Activated T-helper 1 cell treated with anti-CD3 and anti-CD28 coated beads, Interleukin-12 subunit alpha, Interleukin-12 subunit beta, Interleukin-2, Interleukin-4 antibody, amounts not matched to agents 30 ng/mL and 10 ng/mL and 1 ng/mL, durations not matched to agents 14 hours and 24 hours and 36 hours (primary cell): ENCODE measurements at regions of chr2 and their contacts with region 1.

Region 1: GRCh38 chr2:219388127-219388844 is 574 bp upstream of the DNPEP start:
- DNase-seq: peak; percentile 95
- H3K4me3 Mint-ChIP-seq: peak overlapping the region; percentile 97
- H3K27ac Mint-ChIP-seq: peak overlapping the region; percentile 67
- H3K4me1 Mint-ChIP-seq: peaks cover 6% of the 10 kb centered on the region
- H3K27me3 Mint-ChIP-seq: peaks cover 23% of the 10 kb centered on the region

Region 2: DNA sequence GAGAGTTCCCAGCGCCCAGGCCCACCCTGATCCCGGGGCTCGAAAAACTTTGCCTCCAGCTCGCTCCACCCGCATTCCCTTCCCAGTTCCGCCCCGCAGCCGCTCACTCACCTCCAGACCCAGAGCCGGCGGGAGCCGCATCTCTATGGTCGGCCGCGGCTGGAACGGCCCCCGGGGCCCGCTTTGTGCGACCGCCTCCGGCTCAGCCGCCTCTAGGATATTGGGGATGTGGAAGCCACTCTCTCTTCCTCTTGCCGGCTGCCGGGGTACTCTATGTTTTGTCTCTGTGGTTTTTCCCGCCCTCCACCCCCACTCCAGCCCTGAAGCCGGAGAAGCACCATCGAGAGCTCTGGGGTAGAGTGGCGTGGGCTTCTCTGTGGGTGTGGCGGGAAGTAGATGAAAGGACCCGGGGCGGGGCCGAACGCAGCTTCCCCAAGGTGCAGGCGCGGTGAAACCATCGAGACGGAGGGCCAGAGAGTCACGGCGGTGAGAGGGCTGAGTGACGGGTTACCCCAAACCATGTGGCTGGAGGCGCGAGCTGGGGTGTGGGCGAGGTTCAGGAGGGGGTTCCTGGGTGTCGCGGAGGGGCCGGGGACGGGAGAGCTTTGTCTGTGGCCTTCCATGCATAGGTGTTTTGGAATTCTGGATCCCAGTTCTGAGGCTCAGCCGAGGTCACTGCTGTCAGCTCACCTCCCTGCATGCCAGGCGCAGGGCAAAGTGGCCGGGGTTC is 728.9 kb before region 1 on chr2 and contains the starts of genes BCS1L and ZNF142:
- intact Hi-C with region 1: loop called (anchors 2 kb)
- DNase-seq: peak; percentile 92
- H3K4me3 Mint-ChIP-seq: peak within 1 kb of the TSS; percentile 99
- H3K27ac Mint-ChIP-seq: peak within 1 kb of the TSS; percentile 97
- H3K4me1 Mint-ChIP-seq: peaks cover 29% of the 10 kb centered on the region
- H3K27me3 Mint-ChIP-seq: no peaks in the 10 kb centered on the region
- total RNA-seq, gene BCS1L: 85.1 and 85.3 TPM in 2 replicates
- total RNA-seq, gene ZNF142: 61.8 and 64.4 TPM in 2 replicates

Region 3: GRCh38 chr2:219177552-219178376 is 210.5 kb before region 1 on chr2 and contains the start of gene RETREG2:
- intact Hi-C with region 1: loop called (anchors 1 kb)
- DNase-seq: peak; percentile 74
- H3K4me3 Mint-ChIP-seq: peak within 1 kb of the TSS; percentile 91
- H3K27ac Mint-ChIP-seq: peak within 1 kb of the TSS; percentile 96
- H3K4me1 Mint-ChIP-seq: peaks cover 72% of the 10 kb centered on the region
- H3K27me3 Mint-ChIP-seq: no peaks in the 10 kb centered on the region
- total RNA-seq, gene RETREG2: 58.4 and 61.5 TPM in 2 replicates

Region 4: DNA sequence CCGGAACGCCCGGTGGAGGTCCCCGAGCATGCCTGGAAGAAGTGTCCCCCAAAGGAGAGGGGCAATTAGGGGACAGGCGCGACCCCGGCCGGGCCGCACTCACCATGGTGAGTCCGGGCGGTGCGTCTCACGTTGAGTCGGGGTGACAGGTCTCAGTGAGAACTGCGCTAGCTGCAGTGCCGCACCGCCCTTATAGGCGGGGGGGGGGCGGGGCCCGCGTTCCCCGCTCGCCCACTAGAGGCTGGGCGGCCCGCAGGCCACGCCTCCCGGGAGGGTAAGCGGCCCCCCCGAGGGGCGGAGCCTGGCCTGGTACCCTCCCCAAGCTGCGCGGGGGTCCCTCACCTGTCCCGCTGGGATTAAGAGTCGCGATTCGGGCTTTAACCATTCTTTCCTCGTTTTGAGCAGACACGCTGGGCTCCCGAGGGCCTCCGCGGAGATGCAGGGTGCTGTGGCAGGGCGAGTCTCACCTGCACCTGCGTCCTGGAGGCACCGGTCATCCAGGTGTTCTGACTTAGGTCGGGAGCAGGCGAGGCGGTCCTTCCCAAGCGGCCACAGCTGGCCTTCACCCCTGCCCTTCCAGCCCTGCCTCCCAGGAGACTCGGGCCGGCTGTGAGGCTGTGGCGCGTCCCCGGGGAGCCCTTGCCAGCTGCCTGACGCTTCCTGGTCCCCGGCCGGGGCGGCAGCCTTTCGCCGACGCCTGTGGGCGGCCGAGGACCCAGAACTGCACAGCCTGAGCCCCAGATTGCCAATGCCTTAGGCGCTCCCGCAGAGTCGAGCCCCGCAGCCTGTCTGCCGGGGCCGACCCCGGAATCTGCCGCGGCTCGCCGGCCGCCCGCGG is 134.3 kb before region 1 on chr2 and contains the start of gene TUBA4A:
- intact Hi-C with region 1: loop called (anchors 1 kb)
- DNase-seq: peak; percentile 87
- H3K4me3 Mint-ChIP-seq: peak within 1 kb of the TSS; percentile 93
- H3K27ac Mint-ChIP-seq: peak within 1 kb of the TSS; percentile 98
- H3K4me1 Mint-ChIP-seq: peaks cover 50% of the 10 kb centered on the region
- H3K27me3 Mint-ChIP-seq: no peaks in the 10 kb centered on the region
- total RNA-seq, gene TUBA4A: 211 and 217 TPM in 2 replicates

Region 5: DNA sequence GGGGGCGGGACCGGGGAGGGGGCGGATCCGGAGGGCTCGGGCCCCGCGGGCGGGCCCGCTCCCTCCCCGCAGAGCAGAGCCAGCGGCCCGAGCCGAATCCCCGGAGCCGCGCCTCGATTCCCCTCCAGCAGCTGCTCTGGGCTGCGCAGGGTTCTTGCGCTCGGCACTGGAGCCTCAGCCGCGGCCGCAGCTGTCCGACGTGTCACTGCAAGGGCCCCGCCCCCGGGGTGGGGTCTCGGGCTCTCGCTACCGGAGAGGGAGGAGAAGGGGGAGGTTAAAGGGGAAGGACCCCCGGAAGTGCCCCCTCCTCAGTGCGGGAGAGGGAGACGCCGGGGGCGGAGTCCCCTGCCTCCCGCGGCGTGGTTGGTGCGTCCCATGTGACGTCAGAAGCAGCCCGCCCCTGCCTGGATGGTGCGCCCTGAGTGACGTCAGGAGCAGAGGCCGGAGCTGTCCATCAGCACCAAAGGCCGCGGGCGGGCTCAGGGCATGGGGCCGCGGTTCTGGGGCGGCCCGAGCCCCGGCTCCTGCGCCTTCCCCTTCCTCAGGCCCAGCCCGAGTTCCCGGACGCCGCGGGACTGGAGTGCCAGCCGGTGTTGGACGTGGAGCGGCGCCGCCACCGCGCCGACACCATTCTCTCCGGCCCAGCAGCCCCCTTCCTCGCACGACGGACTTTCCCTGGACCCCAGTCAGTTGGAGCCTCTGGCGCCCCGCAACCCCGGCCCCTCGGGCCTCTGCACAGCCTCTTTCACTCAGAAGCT is 155.5 kb after region 1 on chr2 and contains the starts of genes CHPF and TMEM198:
- intact Hi-C with region 1: loop called (anchors 1 kb)
- DNase-seq: peak; percentile 94
- H3K4me3 Mint-ChIP-seq: peak within 1 kb of the TSS; percentile 93
- H3K27ac Mint-ChIP-seq: peak within 1 kb of the TSS; percentile 85
- H3K4me1 Mint-ChIP-seq: peaks cover 20% of the 10 kb centered on the region
- H3K27me3 Mint-ChIP-seq: peaks cover 25% of the 10 kb centered on the region
- total RNA-seq, gene CHPF: 41.3 and 43.4 TPM in 2 replicates
- total RNA-seq, gene TMEM198: 2.9 and 3.3 TPM in 2 replicates

Region 6: GRCh38 chr2:219765231-219765911 is 377.1 kb after region 1 on chr2:
- intact Hi-C with region 1: no loop called
- DNase-seq: no peak
- H3K4me3 Mint-ChIP-seq: no peak overlapping the region
- H3K27ac Mint-ChIP-seq: no peak overlapping the region
- H3K4me1 Mint-ChIP-seq: no peaks in the 10 kb centered on the region
- H3K27me3 Mint-ChIP-seq: no peaks in the 10 kb centered on the region